ENCODE measurements at regions of chr9 and their contacts with region 1.

Region 1: GRCh38 chr9:109574068-109574882 is 76.2 kb upstream of the PTPN3 start:
- DNase-seq: peak in 1 of 5 donors; percentile 23
- H3K4me3 ChIP-seq: no peak overlapping the region
- H3K27ac ChIP-seq: no peak overlapping the region
- H3K4me1 ChIP-seq: no peaks in the 10 kb centered on the region
- H3K27me3 ChIP-seq: no peaks in the 10 kb centered on the region
- CTCF ChIP-seq: peak in 1 of 3 donors; percentile 70
- EP300 ChIP-seq: no peak
- POLR2A ChIP-seq: no peak

Region 2: DNA sequence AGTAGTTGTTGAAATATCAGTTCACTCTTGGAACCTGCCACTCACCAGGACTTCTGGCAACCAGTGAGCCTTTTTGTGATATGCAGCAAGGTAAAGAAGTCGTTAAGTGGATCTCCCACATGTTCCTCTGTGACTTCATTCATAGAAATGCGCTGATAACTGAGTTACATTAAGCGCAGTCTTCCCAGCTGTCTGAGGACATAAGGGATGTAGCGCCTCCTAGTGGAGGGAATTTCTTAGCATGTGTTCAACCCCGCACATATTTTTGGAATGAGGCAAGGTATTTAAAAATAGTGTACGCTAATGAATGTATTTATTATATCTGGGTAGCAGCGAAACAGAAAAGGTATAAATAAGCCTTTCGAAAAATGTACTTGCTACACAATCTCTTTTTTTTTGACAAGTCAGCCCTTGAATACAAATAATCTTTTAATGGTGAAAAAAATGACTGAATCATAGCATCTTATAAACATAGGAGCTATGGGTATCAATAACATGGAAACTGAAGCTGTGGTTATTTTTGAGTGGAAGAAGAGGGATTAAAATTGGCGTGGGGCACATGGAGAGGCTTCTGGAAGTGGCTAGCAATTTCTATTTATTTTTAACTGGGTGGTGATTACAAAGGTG is 243.7 kb after region 1 on chr9:
- intact Hi-C with region 1: loop called in 1 of 4 experiments (anchors 10 kb)
- DNase-seq: peak in 4 of 5 donors; percentile 15 to 69 (median 52)
- H3K4me3 ChIP-seq: no peak overlapping the region
- H3K27ac ChIP-seq: no peak overlapping the region
- H3K4me1 ChIP-seq: peaks cover 4% of the 10 kb centered on the region
- H3K27me3 ChIP-seq: no peaks in the 10 kb centered on the region
- CTCF ChIP-seq: peak; percentile 35 to 95 (median 56)
- EP300 ChIP-seq: no peak
- POLR2A ChIP-seq: no peak

Region 3: GRCh38 chr9:109880277-109881169 is 306.2 kb after region 1 on chr9:
- intact Hi-C with region 1: loop called in 1 of 4 experiments (anchors 10 kb)
- DNase-seq: no peak
- H3K4me3 ChIP-seq: no peak overlapping the region
- H3K27ac ChIP-seq: no peak overlapping the region
- H3K4me1 ChIP-seq: no peaks in the 10 kb centered on the region
- H3K27me3 ChIP-seq: no peaks in the 10 kb centered on the region
- CTCF ChIP-seq: no peak
- EP300 ChIP-seq: no peak
- POLR2A ChIP-seq: no peak

Measured in ovary (tissue), 10 donors.